ENCODE measurements at regions of chr5 and their contacts with region 1.

Region 1: DNA sequence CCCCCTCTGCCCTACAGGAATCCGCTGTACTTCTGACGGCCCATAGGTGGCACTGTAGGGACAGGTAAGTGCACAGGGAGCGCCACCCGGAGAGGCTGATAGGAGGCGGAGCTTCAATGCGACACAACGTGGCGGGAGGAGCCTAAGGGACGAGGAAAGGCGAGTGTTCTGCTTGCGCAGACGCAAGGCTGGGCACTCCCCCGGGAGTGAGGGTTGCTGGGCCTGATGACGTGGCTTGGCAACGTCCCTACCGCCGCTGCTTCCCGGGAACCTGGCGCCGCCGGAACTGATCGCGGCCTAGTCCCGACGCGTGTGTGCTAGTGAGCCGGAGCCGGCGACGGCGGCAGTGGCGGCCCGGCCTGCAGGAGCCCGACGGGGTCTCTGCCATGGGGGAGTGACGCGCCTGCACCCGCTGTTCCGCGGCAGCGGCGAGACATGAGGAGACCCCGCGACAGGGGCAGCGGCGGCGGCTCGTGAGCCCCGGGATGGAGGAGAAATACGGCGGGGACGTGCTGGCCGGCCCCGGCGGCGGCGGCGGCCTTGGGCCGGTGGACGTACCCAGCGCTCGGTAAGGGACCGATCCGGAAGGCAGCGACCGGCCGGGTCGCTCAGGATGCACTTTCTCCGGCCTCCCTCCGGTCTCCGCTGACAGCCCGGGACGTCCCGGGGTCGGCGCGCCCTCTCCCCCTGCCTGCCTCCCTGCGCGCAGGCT is at the start of gene SLC30A5:
- DNase-seq: peak; percentile 97 to 100 (median 98)
- H3K4me3 ChIP-seq: peak within 1 kb of the TSS; percentile 57
- H3K4me3 Mint-ChIP-seq: peak within 1 kb of the TSS; percentile 87 to 97 (median 92)
- H3K27ac ChIP-seq: peak within 1 kb of the TSS; percentile 94
- H3K27ac Mint-ChIP-seq: peak within 1 kb of the TSS; percentile 91 to 100 (median 98)
- H3K4me1 ChIP-seq: peaks cover 23% of the 10 kb centered on the region
- H3K4me1 Mint-ChIP-seq: peaks cover 34 to 49% (median 43%) of the 10 kb centered on the region in 3 donors
- H3K27me3 ChIP-seq: no peaks in the 10 kb centered on the region
- H3K27me3 Mint-ChIP-seq: no peaks in the 10 kb centered on the region
- total RNA-seq, gene SLC30A5: 67.0 to 68.0 TPM

Region 2: DNA sequence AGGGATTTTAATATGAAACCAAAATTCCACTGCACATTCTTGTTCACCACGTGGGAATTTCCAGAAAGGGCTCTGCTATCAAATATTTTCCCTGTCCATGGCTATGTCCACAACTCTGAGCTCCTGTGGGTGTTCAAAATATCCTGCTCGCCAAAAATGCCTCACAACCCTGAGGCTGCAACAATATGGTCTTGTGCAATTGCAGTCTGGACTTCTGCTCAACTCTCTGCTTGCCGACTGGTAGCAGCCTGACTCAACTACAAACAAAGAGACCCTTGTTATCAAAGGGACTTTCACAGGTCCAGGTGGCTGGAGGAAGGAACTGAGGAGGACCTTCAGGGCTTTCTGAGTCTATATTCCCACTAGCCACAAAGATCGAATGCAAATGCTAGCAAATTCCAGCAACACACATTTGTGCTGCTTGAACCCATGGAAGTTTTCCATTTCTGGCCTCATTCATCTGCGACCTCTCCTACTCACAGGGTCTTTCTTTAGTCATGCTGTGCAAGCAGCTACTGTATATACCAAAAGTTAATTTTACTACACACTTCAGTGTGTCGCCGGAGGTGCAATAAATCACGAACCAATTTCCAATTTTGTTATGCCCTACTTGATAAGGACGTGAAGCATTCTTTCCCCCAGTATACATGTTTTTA is 169.3 kb before region 1 on chr5:
- CTCF ChIA-PET with region 1: no interaction called
- POLR2A ChIA-PET with region 1: no interaction called
- DNase-seq: no peak
- H3K4me3 ChIP-seq: no peak overlapping the region
- H3K4me3 Mint-ChIP-seq: no peak overlapping the region
- H3K27ac ChIP-seq: no peak overlapping the region
- H3K27ac Mint-ChIP-seq: no peak overlapping the region
- H3K4me1 ChIP-seq: no peaks in the 10 kb centered on the region
- H3K4me1 Mint-ChIP-seq: no peaks in the 10 kb centered on the region
- H3K27me3 ChIP-seq: no peaks in the 10 kb centered on the region
- H3K27me3 Mint-ChIP-seq: peaks cover 9 to 10% of the 10 kb centered on the region in 2 donors

Region 3: GRCh38 chr5:68942169-68942568 is 151.8 kb before region 1 on chr5:
- CTCF ChIA-PET with region 1: no interaction called
- POLR2A ChIA-PET with region 1: no interaction called
- DNase-seq: no peak
- H3K4me3 ChIP-seq: no peak overlapping the region
- H3K4me3 Mint-ChIP-seq: no peak overlapping the region
- H3K27ac ChIP-seq: no peak overlapping the region
- H3K27ac Mint-ChIP-seq: no peak overlapping the region
- H3K4me1 ChIP-seq: no peaks in the 10 kb centered on the region
- H3K4me1 Mint-ChIP-seq: no peaks in the 10 kb centered on the region
- H3K27me3 ChIP-seq: no peaks in the 10 kb centered on the region
- H3K27me3 Mint-ChIP-seq: peaks cover 2 to 20% of the 10 kb centered on the region in 2 donors

Region 4: DNA sequence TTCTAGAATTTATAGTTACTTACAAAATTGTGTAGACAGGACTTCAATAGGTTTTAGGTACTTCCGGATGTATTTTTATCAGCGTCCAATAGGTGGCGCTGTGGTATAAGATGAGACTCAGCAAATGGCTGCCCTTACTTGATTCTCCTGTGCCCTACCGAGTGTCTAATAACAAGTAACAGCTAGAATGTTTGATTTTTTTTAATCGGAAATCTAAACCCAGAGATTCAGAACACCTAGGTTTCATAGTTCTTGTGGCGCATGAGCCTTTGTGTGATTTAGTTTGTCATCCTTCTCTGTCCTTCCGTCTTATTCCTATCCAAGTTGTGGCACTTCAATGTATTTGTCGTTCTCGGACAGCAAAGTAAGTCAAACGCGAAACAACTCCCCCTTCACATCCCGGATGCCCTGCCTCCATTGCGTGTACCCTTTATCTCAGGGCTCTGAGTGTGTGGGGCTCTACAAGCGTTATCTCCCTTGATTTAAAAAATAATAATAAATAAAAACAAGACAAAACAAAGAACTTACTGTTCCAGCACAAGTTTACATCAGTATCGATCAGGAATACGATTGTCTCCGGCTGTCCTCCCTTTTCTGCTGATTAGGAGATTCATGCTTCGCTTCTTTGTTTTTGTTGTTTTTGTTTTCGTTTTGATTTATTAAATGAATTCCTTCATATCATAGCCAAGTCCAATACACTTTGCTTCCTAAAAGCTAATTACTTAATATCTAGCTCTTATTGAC is 50.8 kb before region 1 on chr5:
- CTCF ChIA-PET with region 1: interaction called, 13 read pairs
- POLR2A ChIA-PET with region 1: interaction called, 5 read pairs
- DNase-seq: peak; percentile 67 to 87 (median 84)
- H3K4me3 ChIP-seq: peak overlapping the region; percentile 75
- H3K4me3 Mint-ChIP-seq: peak overlapping the region; percentile 81 to 94 (median 85)
- H3K27ac ChIP-seq: peak overlapping the region; percentile 22
- H3K27ac Mint-ChIP-seq: peak overlapping the region; percentile 56 to 98 (median 87)
- H3K4me1 ChIP-seq: no peaks in the 10 kb centered on the region
- H3K4me1 Mint-ChIP-seq: peaks cover 4 to 13% (median 4%) of the 10 kb centered on the region in 3 donors
- H3K27me3 ChIP-seq: no peaks in the 10 kb centered on the region
- H3K27me3 Mint-ChIP-seq: peaks cover 0 to 2% of the 10 kb centered on the region in 2 donors

Region 5: GRCh38 chr5:69334793-69335268 is 240.9 kb after region 1 on chr5:
- CTCF ChIA-PET with region 1: interaction called, 11 read pairs
- POLR2A ChIA-PET with region 1: interaction called, 3 read pairs
- DNase-seq: peak; percentile 58 to 82 (median 63)
- H3K4me3 ChIP-seq: no peak overlapping the region
- H3K4me3 Mint-ChIP-seq: peak overlapping the region in 6 of 7 donors; percentile 6 to 70 (median 58)
- H3K27ac ChIP-seq: no peak overlapping the region
- H3K27ac Mint-ChIP-seq: peak overlapping the region in 6 of 8 donors; percentile 34 to 84 (median 78)
- H3K4me1 ChIP-seq: peaks cover 18% of the 10 kb centered on the region
- H3K4me1 Mint-ChIP-seq: peaks cover 12 to 22% (median 20%) of the 10 kb centered on the region in 3 donors
- H3K27me3 ChIP-seq: no peaks in the 10 kb centered on the region
- H3K27me3 Mint-ChIP-seq: peaks cover 0 to 1% of the 10 kb centered on the region in 2 donors